Posterior vena cava (tissue), 2 donors: ENCODE measurements at regions of chr9 and their contacts with region 1.

Region 1: DNA sequence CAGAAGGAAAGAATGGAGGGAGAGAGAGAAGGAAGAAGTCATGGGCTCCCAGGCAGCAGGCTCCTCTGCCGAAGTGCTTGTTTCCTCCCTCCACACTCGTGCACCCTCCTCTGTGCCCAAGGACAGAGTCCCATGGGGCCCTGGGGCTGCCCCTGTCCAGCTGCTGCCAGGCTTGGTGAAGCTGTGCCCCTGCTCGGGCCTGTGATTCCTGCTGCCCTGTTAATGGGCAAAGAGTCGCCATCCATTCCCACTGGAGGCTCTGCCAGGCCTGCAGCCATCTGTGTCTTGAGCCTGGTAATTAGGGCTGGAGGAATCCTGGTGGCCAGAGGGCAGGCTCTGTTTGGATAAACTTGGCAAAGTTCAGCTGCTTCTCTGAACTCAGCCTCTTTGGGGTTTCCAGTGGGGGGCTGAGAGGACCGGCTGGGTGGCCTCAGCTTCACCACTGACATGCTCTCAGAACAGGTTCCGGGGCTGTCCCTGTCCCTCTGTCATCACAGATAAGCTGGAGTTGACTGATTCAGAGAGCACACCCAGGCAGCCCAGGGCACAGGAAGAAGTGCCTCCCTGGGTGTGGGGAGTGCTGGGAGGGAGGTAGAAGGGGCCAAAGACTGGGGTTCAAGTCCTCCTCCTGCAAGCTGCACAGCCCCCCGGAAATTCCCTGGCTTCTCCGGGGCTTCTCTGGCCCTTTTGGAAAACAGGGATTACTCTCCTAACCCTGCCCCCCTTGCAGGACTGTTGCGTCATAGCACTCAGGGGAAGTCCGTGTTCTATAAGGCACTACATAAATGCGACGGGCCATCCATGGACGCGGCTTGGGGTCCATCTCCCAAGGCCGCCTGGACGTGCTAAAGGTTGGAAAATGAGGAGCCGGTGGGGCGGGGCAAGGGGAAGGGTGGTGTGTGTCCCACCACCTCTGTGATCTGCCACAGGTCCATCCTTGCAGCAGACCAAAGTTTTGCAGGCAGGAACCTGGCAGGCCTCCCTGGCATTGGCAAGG is 154.8 kb downstream of the PAX5 start:
- DNase-seq: peak; percentile 53

Region 2: DNA sequence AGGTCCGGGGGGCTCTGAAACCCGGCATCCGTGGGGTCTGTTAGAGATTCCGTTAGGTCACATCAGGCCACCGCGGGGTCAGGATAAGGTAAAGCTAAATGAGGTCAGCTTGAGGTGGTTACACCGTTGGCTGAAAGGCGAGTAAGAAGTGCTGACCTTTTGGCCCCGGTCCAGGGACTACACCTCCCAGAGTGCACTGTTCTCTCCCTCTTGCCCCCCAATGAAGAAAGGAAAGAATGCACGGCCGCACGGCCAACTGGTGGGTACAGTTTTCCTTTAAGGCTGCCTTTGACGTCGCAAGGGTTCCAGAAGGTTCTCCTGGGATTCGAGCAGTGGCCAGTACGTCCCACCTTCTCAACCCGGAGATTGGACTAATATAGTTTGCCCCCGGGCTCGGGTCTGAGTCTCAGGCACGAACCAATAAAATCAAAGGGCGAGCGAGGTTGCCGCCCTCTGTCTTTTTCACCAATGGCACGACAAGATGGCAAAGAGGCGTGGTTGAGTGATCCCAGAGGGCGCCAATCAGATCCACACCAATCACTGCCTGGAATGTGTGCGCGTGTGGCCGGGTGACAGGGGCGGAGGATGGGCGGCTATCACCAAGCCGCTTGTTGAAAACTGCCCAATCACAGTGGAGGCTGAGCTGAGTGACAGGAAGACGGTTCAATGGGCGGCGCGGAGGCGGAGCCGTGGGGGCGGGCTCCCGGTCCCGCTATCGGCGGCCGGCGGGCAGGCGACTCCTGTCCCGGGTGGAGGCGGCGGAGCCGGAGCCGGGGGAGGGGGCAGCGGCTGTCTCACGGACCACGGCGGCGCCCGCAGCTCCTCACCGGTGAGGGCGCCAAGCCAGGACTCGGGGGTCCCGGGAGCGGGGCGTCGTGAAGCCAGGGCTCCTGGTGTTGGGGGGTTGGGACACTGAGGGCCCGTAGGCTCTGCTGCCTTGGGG is 1890.0 kb before region 1 on chr9 and contains the start of gene DNAJB5:
- intact Hi-C with region 1: loop called in 1 of 2 experiments (anchors 10 kb)
- DNase-seq: peak; percentile 99
- total RNA-seq, gene DNAJB5: 68.7 to 82.2 TPM

Region 3: GRCh38 chr9:38035873-38036272 is 1156.6 kb after region 1 on chr9:
- intact Hi-C with region 1: loop called in 1 of 2 experiments (anchors 5 kb)
- DNase-seq: no peak